Sciatic nerve (tissue), 2 donors: ENCODE measurements at regions of chr4 and their contacts with region 1.

Region 1: GRCh38 chr4:166700592-166700991 is 533.7 kb downstream of the SPOCK3 start:
- DNase-seq: no peak
- ATAC-seq: no peak

Region 2: DNA sequence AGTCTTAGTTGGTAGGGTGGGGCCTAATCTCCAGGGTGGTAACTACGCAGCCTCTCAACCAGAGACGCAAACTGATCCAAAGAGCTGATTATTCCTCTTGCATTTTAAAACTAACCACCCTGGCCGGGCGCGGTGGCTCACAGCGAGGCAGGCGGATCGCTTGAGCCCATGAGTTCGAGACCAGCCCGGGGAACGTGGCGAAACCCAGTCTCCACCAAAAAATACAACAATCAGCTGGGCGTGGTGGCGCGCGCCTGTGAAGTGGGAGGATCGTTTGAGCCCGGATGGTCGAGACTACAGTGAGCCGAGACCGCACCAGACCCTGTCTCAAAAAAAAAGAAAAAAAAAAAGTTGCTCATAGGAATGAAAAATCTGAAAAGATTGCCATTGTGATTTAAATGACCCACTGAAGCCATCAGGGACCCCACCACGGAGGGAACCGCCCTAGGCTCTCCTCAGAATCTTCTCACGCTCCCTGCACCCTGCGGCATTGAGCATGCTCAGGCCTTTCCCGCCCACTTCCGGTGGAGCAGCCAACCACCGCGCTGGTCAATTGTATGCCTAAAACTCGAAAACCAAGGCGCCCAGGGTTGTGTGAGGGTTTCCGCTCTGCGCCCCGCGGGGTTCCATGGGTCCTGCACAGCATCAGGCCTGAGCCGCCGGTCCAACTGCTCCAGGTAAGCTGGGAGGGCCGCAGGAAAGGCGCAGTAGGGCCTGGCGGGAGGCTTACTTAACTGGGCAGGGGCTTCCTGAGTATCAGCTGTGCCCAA is 1669.0 kb before region 1 on chr4 and contains the start of gene TRIM60:
- intact Hi-C with region 1: loop called (anchors 5 kb)
- DNase-seq: no peak
- ATAC-seq: no peak
- total RNA-seq, gene TRIM60: not detected